MCF 10A (cell line): ENCODE measurements at regions of chr6 and their contacts with region 1.

Region 1: DNA sequence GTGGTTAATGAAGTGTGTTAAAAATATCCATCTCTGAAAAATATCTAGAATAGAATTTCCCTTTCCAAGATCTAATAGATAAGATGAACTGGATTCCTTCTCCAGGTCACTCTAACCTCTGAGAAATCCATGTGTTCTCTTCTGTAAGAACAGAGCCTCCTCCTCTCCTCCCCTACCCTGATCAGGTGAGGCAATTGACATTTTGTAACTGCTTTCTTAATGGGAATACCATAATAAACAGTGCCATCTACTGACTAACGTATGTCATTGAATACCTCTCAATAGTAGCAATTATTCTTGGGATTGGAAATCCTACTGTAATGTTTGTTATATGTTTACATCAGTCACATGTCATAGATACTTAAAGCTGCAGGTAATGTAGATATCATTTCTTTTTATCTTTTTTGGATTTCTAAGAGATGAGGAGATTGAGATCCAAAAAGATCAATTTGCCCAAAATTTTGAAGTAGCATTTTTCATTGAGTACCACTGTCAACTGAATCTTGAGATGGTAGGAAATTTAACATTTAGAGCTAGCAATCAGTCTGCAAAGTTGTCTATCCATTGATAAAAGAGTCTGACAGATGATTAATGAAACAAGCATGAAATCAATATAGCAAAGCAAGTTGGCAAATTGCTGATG is 365.8 kb upstream of the HSF2 start:
- DNase-seq: peak; percentile 69
- H3K4me3 Mint-ChIP-seq: no peak overlapping the region
- H3K27ac Mint-ChIP-seq: no peak overlapping the region
- H3K4me1 Mint-ChIP-seq: peaks cover 14% of the 10 kb centered on the region
- H3K27me3 Mint-ChIP-seq: no peaks in the 10 kb centered on the region
- CTCF ChIP-seq: peak; percentile 57

Region 2: DNA sequence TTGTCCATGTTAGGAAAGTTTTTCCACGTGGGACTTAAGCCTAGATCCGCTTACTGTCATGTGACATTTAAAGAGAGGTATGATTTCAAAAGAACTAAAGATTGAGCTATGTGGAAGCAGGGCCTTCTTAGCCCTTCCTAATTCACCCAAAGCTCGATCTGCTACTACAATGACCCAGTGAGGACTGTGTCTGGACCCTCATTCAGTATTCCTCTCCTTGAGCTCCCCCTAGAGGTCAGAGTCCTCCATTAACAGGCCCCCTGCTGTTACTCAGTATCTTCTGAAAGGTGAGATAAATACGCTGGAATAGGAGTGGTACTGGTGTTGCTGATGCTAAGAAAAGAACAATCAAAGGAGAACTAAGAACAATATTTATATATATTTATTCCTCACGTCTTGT is 184.2 kb before region 1 on chr6:
- CTCF ChIA-PET with region 1: interaction called, 3 read pairs
- POLR2A ChIA-PET with region 1: no interaction called
- intact Hi-C with region 1: loop called (anchors 2 kb)
- DNase-seq: peak; percentile 80
- H3K4me3 Mint-ChIP-seq: no peak overlapping the region
- H3K27ac Mint-ChIP-seq: no peak overlapping the region
- H3K4me1 Mint-ChIP-seq: no peaks in the 10 kb centered on the region
- H3K27me3 Mint-ChIP-seq: no peaks in the 10 kb centered on the region
- CTCF ChIP-seq: peak; percentile 87